ENCODE measurements at regions of chr15 and their contacts with region 1.

Region 1: DNA sequence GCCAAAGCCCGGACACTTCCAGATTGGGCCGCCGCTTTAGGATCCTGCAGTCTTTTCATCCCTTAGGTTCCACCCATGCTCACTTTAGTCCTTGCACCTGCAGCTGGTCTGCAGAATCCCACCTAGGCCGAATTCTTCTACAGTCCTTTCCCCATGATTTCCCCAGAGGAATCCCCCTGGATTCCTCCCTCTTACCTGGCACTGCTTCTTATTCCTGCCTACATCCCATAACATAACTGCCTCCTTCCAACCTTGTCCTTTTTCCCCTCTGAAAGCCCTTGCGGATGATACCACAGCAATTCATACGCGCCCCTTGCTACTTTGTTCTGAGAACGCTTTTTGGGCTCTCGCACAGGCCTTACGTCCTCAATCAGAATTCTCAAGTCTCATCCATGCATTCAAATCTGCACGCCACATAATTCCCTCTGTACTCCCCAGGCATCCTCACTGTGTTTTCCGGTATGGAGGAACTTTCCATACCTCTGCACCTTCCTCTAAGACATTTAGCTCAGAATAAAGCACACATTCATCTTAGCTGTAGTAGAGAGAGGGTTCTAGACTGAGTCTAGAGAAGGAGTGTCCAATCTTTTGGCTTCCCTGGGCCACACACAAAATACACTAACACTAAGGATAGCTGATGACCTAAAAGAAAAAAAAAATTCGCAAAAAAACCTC is 619 bp downstream of the EIF2AK4 start:
- DNase-seq: peak in 1 of 9 experiments; percentile 30
- ATAC-seq: no peak
- H3K4me3 ChIP-seq: peak overlapping the region; percentile 79 to 82
- H3K4me3 Mint-ChIP-seq: peak overlapping the region; percentile 83
- H3K27ac ChIP-seq: peak overlapping the region in 1 of 2 experiments; percentile 47
- H3K27ac Mint-ChIP-seq: peak overlapping the region; percentile 5
- H3K4me1 ChIP-seq: peaks cover 7% of the 10 kb centered on the region
- H3K4me1 Mint-ChIP-seq: peaks cover 34% of the 10 kb centered on the region
- H3K27me3 ChIP-seq: no peaks in the 10 kb centered on the region
- H3K27me3 Mint-ChIP-seq: peaks cover 2% of the 10 kb centered on the region
- CTCF ChIP-seq: no peak

Region 2: DNA sequence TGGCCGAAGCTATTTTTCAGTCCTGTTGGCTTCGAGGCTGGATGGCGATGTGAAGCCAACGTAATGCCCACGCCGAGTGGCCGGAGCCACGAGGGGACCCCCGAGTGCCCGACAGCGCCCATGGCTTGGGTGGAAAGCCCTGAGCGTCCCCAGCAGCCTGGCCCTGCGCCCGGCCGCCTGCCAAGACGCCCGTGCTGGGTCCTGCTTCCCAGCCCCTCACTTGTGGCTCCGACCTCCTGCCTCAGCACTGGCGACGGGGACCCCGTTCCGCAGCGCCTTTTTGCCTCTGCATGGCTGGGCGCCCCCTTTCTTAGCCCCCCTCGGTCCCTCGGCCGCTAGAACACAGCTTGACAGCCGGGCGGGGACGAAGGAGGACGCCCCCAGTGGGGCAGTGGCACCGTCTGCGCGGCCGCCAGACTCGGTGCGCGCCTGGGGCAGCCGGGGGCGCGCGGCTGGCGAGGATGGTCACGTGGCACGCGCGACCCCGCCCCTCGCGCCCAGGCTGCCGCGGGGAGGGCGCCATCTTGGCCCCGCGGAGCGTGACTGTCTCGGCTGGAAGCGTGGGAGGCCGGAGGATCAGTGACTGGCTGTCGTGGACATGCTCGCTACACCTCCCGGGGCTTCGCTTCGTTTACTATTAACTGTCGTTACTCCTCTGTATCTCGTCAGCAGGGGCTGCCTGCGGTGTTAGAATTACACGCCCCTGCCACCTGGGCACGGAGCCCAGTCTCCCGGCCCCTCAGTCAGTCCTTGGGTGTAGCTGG is 13.8 kb before region 1 on chr15:
- CTCF ChIA-PET with region 1: interaction called, 4 read pairs
- POLR2A ChIA-PET with region 1: interaction called, 4 read pairs
- intact Hi-C with region 1: loop called (anchors 1 kb)
- DNase-seq: peak; percentile 57 to 87 (median 76)
- ATAC-seq: peak; percentile 90
- H3K4me3 ChIP-seq: peak overlapping the region; percentile 69 to 72
- H3K4me3 Mint-ChIP-seq: peak overlapping the region; percentile 87
- H3K27ac ChIP-seq: peak overlapping the region in 1 of 2 experiments; percentile 23
- H3K27ac Mint-ChIP-seq: peak overlapping the region; percentile 41
- H3K4me1 ChIP-seq: peaks cover 19% of the 10 kb centered on the region
- H3K4me1 Mint-ChIP-seq: peaks cover 13% of the 10 kb centered on the region
- H3K27me3 ChIP-seq: peaks cover 7 to 22% of the 10 kb centered on the region in 2 experiments
- H3K27me3 Mint-ChIP-seq: peaks cover 19% of the 10 kb centered on the region
- CTCF ChIP-seq: no peak

Region 3: GRCh38 chr15:40038638-40039543 is 104.4 kb after region 1 on chr15 and contains the start of gene SRP14:
- CTCF ChIA-PET with region 1: no interaction called
- POLR2A ChIA-PET with region 1: no interaction called
- intact Hi-C with region 1: loop called in 1 of 2 experiments (anchors 5 kb)
- DNase-seq: peak; percentile 86 to 96 (median 93)
- ATAC-seq: peak; percentile 94
- H3K4me3 ChIP-seq: peak within 1 kb of the TSS; percentile 92 to 99
- H3K4me3 Mint-ChIP-seq: peak within 1 kb of the TSS; percentile 99
- H3K27ac ChIP-seq: peak within 1 kb of the TSS; percentile 84 to 96
- H3K27ac Mint-ChIP-seq: peak within 1 kb of the TSS; percentile 99
- H3K4me1 ChIP-seq: peaks cover 16% of the 10 kb centered on the region
- H3K4me1 Mint-ChIP-seq: peaks cover 43% of the 10 kb centered on the region
- H3K27me3 ChIP-seq: no peaks in the 10 kb centered on the region
- H3K27me3 Mint-ChIP-seq: no peaks in the 10 kb centered on the region
- CTCF ChIP-seq: no peak
- total RNA-seq, gene SRP14: 133 to 135 TPM

Region 4: GRCh38 chr15:40847205-40847961 is 912.8 kb after region 1 on chr15:
- CTCF ChIA-PET with region 1: no interaction called
- POLR2A ChIA-PET with region 1: no interaction called
- intact Hi-C with region 1: no loop called
- DNase-seq: peak in 1 of 9 experiments; percentile 31
- ATAC-seq: no peak
- H3K4me3 ChIP-seq: no peak overlapping the region
- H3K4me3 Mint-ChIP-seq: no peak overlapping the region
- H3K27ac ChIP-seq: no peak overlapping the region
- H3K27ac Mint-ChIP-seq: peak overlapping the region; percentile 57
- H3K4me1 ChIP-seq: peaks cover 8% of the 10 kb centered on the region
- H3K4me1 Mint-ChIP-seq: peaks cover 11% of the 10 kb centered on the region
- H3K27me3 ChIP-seq: peaks cover 0 to 4% of the 10 kb centered on the region in 2 experiments
- H3K27me3 Mint-ChIP-seq: peaks cover 18% of the 10 kb centered on the region
- CTCF ChIP-seq: no peak